Activated B cell treated with CpG ODN at 0.5 μM for 24 hours (primary cell): ENCODE measurements at regions of chr5 and their contacts with region 1.

Region 1: DNA sequence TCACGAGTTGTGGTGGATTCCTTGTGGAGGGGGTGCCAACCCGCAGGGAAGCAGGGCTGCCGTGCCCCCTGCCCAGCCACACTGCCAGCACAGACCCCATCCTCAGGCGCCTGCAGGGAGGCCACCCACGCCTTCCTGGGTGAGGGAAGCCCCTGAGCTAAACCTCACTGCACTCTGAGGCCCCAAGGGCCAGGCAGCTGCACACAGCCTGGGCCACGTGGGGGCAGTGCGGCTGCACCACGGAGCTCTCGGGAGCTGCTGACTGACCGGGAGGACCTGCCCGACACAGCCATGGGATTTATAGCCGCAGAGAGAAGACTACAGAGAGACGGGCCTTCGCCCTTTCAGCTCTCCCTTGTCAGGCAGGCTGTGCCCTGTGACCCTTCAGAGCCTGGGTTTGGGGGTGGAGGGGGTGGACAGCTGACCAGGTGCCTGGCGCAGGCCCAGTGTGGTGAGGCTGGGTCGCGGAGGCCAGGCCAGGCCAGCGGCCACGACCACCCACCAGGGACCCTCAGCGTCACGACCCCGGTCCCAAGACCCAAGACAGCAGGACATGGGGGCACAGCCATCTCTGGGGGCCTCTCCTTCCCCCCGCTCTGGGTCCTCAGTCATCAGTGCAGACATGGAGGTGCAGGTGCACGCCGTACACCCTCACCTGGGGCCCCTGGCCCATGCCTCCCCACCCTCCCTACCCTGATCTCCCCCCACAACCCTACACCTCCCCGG is 4.3 kb upstream of the AHRR start:
- DNase-seq: peak; percentile 57
- ATAC-seq: peak; percentile 86
- H3K4me3 Mint-ChIP-seq: no peak overlapping the region
- H3K27ac Mint-ChIP-seq: no peak overlapping the region
- H3K4me1 Mint-ChIP-seq: peaks cover 21% of the 10 kb centered on the region
- H3K27me3 Mint-ChIP-seq: peaks cover 11% of the 10 kb centered on the region
- CTCF ChIP-seq: no peak

Region 2: GRCh38 chr5:424301-425110 is 107.3 kb after region 1 on chr5:
- CTCF ChIA-PET with region 1: interaction called, 34 read pairs
- POLR2A ChIA-PET with region 1: interaction called, 5 read pairs
- intact Hi-C with region 1: loop called (anchors 1 kb)
- DNase-seq: peak; percentile 17
- ATAC-seq: peak; percentile 80
- H3K4me3 Mint-ChIP-seq: no peak overlapping the region
- H3K27ac Mint-ChIP-seq: peak overlapping the region; percentile 37
- H3K4me1 Mint-ChIP-seq: peaks cover 16% of the 10 kb centered on the region
- H3K27me3 Mint-ChIP-seq: peaks cover 3% of the 10 kb centered on the region
- CTCF ChIP-seq: no peak

Region 3: DNA sequence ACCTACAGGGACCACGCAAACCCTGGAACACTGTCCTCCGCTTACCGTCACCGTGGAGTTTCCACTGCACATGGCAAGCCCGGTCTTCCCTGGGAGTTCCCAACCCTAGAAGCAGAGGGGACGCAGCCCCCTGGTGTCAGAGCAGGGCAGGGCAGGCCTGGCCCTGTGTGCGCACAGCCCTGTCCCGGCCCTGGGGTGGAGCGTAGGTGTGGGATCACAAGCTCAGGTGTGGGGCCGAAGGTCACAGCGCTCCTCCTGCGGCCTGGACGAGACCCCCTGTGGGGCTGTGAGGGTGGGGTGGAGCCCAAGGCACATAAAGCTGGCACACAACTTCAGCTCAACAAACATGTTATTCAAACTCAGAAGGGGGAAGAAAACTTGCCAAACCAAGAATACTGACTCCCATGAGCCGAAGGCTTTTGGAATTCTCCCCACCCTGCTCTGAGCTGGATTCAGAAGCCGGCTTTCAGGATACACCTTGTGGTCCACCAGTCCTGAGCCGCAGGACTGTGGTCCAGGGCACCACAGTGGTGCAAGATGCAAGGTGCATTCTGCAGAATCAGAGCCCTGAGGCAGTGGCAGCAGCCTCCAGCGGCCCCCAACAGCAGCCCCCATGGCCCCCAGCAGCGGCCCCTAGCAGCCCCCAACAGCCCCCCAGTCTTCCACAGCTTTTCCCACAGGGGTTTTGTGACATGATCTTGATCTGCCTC is 113.9 kb after region 1 on chr5:
- CTCF ChIA-PET with region 1: interaction called, 34 read pairs
- POLR2A ChIA-PET with region 1: interaction called, 4 read pairs
- intact Hi-C with region 1: loop called (anchors 1 kb)
- DNase-seq: peak; percentile 50
- ATAC-seq: peak; percentile 97
- H3K4me3 Mint-ChIP-seq: no peak overlapping the region
- H3K27ac Mint-ChIP-seq: no peak overlapping the region
- H3K4me1 Mint-ChIP-seq: no peaks in the 10 kb centered on the region
- H3K27me3 Mint-ChIP-seq: peaks cover 11% of the 10 kb centered on the region
- CTCF ChIP-seq: no peak

Region 4: DNA sequence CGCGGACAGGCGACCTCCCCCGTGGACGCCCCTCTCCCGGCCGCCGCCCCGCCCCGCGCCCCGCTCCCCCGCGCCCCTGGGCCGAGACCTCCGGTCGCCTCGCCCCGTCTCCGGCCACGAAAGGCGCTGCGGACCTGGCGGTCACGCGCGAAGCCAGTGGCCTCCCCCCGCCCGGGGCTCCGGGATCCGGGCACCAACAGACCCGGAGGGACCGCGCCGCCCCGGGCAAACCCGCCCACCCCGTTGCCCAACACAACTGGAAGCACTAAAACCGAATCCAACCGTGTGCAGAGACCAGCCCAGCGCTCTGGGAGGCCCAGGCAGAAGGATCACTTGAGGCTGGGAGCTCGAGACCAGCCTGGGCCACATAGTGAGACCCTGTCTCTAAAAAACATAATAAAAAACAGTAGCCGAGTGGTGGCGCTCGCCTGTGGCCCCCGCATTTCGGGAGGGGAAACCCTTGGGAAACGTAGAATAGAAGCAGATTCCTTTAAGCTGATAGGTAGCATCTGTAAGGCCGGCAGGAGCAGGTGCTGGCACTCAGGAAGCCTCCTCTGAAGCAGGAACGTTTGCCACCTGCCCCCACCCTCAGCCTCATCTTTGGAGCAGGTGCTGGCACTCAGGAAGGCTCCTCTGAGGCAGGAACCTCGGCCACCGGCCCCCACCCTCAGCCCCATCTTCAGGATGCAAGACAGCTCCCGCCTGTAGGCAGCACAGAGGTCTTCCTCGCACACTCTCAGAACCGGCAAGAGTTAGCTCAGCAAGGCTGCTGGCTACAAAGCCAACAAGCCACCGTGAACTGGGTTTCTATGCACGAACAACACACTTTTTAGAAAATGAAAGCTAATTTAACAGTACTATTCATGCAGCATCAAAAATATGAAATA is 211.6 kb after region 1 on chr5:
- CTCF ChIA-PET with region 1: no interaction called
- POLR2A ChIA-PET with region 1: no interaction called
- intact Hi-C with region 1: no loop called
- DNase-seq: no peak
- ATAC-seq: no peak
- H3K4me3 Mint-ChIP-seq: peak overlapping the region; percentile 39
- H3K27ac Mint-ChIP-seq: no peak overlapping the region
- H3K4me1 Mint-ChIP-seq: peaks cover 57% of the 10 kb centered on the region
- H3K27me3 Mint-ChIP-seq: peaks cover 52% of the 10 kb centered on the region
- CTCF ChIP-seq: no peak

Region 5: DNA sequence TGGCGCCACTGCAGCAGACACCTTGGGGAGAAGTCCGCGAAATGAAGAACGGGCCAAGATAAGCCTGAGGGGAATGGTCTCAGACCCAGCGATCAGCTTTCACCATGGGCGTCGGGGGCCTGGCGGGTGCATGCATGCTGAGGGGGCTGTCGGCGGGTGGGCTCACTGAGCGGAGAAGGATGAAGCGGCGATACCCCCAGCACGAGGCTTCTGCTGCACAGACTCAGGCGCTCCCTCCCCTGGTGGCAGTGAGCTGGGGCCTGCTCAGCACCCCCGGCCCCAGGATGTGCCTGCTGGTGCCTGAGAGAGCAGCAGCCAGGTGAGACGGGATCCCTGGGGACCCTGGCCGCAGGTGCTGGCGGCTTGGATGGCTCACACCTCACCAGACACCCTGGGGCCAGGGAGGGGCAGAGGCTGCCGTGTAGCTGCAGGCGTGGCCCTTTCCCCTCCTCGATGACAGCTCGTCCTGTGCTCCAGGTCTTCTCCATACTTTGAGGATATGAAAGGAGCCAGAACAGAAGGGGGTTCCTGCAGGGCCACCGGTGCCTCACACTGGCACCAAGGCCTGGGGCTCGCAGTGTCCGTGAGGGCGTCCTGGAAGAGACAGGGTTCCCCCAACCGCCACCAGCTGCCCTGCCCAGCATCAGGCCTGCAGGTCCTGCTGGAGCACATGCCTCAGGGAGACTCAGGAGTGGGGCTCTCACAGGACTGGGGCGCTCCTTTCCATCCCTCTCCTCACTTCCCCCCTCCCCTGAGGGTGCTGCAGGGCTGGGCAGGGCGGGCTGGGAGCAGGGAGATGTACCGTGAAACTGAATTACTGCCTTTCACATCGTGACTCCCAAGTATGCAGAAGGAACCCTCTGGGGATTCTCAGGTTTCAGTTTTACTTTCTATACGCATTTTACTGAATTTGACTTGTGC is 326.4 kb after region 1 on chr5:
- CTCF ChIA-PET with region 1: no interaction called
- POLR2A ChIA-PET with region 1: no interaction called
- intact Hi-C with region 1: loop called (anchors 10 kb)
- DNase-seq: no peak
- ATAC-seq: peak; percentile 79
- H3K4me3 Mint-ChIP-seq: peak overlapping the region; percentile 52
- H3K27ac Mint-ChIP-seq: no peak overlapping the region
- H3K4me1 Mint-ChIP-seq: peaks cover 17% of the 10 kb centered on the region
- H3K27me3 Mint-ChIP-seq: no peaks in the 10 kb centered on the region
- CTCF ChIP-seq: no peak

Region 6: GRCh38 chr5:902129-902916 is 585.1 kb after region 1 on chr5:
- CTCF ChIA-PET with region 1: interaction called, 14 read pairs
- POLR2A ChIA-PET with region 1: no interaction called
- intact Hi-C with region 1: loop called (anchors 2 kb)
- DNase-seq: no peak
- ATAC-seq: no peak
- H3K4me3 Mint-ChIP-seq: no peak overlapping the region
- H3K27ac Mint-ChIP-seq: no peak overlapping the region
- H3K4me1 Mint-ChIP-seq: no peaks in the 10 kb centered on the region
- H3K27me3 Mint-ChIP-seq: no peaks in the 10 kb centered on the region
- CTCF ChIP-seq: no peak